Activated CD4-positive, alpha-beta T cell treated with anti-CD3 and anti-CD28 coated beads, Interleukin-2, amount 10 ng/mL, durations not matched to agents 24 days and 14 days (primary cell): ENCODE measurements at regions of chr17 and their contacts with region 1.

Region 1: DNA sequence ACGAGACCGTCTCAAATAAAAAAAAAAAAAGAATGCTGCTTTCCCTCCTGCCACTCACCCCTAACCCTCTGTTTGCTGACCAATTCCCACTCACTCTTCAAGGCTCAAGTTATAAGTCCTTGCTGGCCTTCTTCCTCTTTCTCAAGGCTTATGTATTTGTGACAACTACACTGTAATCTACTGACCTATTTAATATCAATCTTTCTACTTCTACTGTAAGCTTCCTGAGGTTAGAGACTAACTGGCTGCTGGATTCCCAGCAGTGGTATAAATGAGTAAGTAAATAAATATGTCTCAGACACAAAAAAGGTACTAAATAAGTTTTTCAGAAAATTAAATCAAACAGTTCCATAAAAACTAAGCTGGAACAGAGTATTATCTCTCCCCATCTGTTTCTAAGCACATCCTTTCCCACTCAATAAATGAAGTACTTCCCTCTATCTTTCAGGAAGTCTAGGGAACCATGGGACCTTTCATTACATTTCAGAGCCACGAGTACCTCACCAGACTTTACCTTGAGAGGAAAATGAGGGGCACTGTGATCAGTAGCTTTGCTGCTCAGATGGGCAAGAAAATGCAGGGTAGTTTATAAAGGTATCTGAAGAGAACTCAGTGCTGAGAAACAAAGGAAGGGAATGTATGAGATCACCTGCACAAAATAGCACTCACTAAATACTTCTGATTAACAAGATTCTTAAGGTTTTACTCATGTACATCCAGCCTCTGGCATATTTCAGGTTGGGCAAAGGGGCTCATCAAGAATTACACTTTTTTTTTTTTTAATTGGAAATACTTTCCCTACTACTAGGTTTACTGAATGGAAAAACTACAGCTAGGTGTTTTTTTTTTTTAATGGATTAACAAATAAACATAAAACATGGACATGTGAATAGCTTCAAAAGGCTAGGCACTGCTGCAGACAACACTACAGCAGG is 10.8 kb downstream of the SSH2 start:
- DNase-seq: peak; percentile 23
- H3K4me3 Mint-ChIP-seq: no peak overlapping the region
- H3K27ac Mint-ChIP-seq: no peak overlapping the region
- H3K4me1 Mint-ChIP-seq: peaks cover 17% of the 10 kb centered on the region
- H3K27me3 Mint-ChIP-seq: no peaks in the 10 kb centered on the region

Region 2: DNA sequence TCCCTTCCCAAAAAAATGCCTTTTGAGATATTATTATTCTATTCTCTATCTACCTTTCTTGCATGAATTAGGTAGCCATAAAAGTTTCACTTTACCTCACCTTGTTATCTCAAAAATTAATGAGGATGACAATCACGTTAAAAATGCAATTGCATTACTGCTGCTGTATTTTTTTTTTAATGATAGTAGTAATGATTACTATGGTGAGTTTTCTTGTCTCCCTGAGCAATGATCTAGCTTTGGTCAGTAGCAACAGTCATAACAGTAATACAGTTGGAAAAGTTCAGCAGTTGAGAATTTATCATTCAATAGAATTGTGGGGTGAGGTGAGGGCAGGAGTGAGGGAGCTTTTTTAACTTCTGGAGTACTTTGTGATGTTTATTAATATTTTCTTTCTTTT is 22.1 kb after region 1 on chr17 and contains the start of gene EFCAB5:
- intact Hi-C with region 1: loop called (anchors 1 kb)
- DNase-seq: no peak
- H3K4me3 Mint-ChIP-seq: no peak within 1 kb of the TSS
- H3K27ac Mint-ChIP-seq: no peak within 1 kb of the TSS
- H3K4me1 Mint-ChIP-seq: peaks cover 6% of the 10 kb centered on the region
- H3K27me3 Mint-ChIP-seq: no peaks in the 10 kb centered on the region
- total RNA-seq, gene EFCAB5: 0.21 and 0.28 TPM in 2 replicates